ENCODE measurements at regions of chr9 and their contacts with region 1.

Region 1: DNA sequence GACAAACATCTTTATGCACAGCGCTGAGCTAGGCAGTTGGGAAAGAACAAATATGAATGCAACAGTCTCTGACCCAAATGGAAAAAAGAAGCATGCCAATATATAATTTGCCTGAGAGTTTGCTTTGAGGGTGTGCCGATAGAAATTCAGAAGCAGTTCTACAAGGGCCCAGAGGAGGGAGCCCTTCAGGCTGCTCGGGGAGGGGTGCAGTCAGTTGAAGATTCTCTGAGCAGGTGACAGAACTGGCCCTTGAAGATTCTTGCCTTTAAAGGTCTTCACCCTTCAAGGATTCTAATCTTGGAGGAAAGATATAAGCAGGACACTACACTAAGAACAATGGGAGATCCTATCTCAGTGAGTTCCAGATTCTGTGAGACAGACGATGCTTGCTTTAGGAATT is 3.7 kb upstream of the PAPPA start:
- DNase-seq: no peak

Region 2: DNA sequence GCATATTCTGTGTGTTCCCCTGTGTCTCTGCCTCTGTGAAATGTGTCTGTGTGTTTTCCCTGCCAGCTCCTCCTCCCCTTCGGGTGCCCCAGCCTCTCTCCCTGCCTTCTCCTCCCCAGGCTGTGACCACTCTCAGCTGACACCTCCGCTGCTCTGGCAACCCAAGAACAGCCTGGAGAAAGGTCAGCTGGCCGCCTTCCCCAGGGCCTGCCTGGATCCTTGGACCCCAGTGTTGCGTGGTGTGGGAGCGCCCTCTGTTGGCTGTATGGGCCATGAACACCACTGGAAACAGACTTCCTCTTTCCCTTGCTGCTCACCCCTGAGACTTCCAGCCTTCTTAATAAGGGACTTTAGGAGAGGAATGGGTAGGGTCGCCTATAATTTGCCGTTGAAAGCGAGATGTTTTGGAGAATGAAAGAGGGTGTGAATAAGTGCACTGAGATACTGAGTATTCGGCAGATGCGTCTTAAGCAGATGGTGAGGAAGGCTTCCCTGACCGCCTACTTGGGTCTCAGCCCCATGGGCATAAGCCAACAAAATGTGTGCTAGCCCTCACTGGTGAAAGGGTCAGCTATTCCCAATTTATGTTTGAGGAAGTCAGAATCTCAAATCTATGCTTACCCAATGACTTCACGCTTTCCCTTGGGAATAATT is 422.4 kb after region 1 on chr9:
- intact Hi-C with region 1: loop called (anchors 5 kb)
- DNase-seq: peak; percentile 61 to 95 (median 76)

Region 3: DNA sequence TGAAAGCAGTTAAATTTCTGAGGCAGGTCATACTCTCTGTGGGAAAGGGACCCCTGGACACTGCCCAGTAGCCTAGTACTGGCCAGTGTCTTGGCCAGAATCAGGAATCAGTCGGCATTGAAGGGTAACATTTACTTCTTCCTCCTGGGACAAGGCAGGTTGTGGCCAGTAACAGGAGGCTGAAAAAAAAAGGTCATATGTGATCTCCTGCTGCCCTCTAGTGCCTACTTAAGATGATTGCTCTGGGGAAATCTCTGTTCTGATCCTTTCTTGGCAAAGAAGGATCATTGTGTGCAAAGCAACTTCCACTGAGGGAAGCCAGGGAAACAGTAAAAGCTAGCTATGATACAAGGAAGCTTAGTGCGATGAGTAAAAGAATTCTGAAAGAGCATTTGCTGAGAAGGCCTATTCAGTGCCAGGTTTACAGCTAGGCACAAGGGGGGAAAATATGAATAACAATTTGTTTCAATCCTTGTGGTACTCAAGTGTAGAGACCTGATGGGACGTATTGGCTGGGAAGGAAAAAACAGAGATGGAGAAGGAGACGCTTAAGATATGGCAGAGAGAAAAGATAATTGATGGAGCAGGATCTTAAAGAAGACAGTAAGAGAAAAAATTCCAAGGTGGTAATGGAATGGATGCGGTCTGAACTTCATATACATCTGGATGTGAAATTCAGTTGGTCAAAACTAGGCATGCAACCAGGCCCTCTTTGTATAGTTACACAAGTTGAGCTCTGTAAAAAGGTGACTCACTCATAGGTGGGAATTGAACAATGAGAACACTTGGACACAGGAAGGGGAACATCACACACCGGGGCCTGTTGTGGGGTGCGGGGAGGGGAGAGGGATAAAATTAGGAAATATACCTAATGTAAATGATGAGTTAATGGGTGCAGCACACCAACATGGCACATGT is 511.5 kb after region 1 on chr9:
- intact Hi-C with region 1: loop called (anchors 5 kb)
- DNase-seq: peak in 1 of 10 donors; percentile 14

Measured in posterior cingulate gyrus (tissue), 11 donors.